ENCODE measurements at regions of chr6 and their contacts with region 1.

Region 1: DNA sequence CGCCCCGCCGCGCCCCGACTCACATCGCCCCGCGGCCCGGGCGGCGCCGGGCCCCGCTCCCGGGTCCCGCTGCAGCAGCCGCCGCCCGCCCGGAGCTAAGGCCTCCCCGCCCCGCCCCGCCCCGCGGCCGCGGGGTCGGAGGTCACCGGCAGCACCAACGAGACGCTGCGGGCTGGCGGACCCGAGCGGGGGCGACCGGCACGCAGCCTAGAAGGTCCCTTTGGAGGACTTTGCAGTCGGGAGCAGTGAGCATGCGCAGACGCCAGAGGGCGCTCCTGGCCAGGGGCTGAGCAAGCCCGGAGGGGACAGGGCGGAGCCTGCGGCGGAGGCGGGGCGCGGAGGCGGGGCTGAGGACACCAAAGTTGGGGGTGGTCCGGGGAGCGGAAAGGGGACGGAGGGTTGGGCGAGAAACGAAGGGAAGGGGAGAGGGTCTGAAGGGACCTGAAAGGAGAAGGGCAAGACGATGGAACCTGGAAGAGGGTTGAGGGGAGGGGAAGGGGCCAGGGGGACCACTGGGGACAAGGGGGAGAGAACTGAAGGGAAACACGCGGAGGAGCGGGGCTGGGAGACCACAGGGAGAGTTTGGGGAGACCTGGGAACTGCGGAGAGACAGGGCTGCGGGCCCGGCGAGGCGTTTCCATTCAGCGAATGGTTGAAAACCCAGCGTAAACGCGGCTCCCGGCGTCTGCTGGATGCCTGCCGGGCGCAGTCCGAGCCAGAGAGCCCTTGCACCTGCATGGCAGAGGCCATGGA is at the start of gene FRS3:
- DNase-seq: peak; percentile 98
- H3K4me3 Mint-ChIP-seq: peak within 1 kb of the TSS; percentile 93
- H3K27ac Mint-ChIP-seq: peak within 1 kb of the TSS; percentile 67
- H3K4me1 Mint-ChIP-seq: peaks cover 14% of the 10 kb centered on the region
- H3K27me3 Mint-ChIP-seq: peaks cover 8% of the 10 kb centered on the region
- total RNA-seq, gene FRS3: 4.7 and 5.8 TPM in 2 replicates

Region 2: GRCh38 chr6:41602864-41603608 is 176.9 kb before region 1 on chr6:
- intact Hi-C with region 1: loop called (anchors 5 kb)
- DNase-seq: peak; percentile 66
- H3K4me3 Mint-ChIP-seq: no peak overlapping the region
- H3K27ac Mint-ChIP-seq: no peak overlapping the region
- H3K4me1 Mint-ChIP-seq: peaks cover 4% of the 10 kb centered on the region
- H3K27me3 Mint-ChIP-seq: peaks cover 4% of the 10 kb centered on the region

Region 3: GRCh38 chr6:41705996-41706835 is 73.8 kb before region 1 on chr6:
- intact Hi-C with region 1: loop called (anchors 10 kb)
- DNase-seq: peak; percentile 43
- H3K4me3 Mint-ChIP-seq: no peak overlapping the region
- H3K27ac Mint-ChIP-seq: peak overlapping the region; percentile 43
- H3K4me1 Mint-ChIP-seq: peaks cover 23% of the 10 kb centered on the region
- H3K27me3 Mint-ChIP-seq: no peaks in the 10 kb centered on the region

Region 4: DNA sequence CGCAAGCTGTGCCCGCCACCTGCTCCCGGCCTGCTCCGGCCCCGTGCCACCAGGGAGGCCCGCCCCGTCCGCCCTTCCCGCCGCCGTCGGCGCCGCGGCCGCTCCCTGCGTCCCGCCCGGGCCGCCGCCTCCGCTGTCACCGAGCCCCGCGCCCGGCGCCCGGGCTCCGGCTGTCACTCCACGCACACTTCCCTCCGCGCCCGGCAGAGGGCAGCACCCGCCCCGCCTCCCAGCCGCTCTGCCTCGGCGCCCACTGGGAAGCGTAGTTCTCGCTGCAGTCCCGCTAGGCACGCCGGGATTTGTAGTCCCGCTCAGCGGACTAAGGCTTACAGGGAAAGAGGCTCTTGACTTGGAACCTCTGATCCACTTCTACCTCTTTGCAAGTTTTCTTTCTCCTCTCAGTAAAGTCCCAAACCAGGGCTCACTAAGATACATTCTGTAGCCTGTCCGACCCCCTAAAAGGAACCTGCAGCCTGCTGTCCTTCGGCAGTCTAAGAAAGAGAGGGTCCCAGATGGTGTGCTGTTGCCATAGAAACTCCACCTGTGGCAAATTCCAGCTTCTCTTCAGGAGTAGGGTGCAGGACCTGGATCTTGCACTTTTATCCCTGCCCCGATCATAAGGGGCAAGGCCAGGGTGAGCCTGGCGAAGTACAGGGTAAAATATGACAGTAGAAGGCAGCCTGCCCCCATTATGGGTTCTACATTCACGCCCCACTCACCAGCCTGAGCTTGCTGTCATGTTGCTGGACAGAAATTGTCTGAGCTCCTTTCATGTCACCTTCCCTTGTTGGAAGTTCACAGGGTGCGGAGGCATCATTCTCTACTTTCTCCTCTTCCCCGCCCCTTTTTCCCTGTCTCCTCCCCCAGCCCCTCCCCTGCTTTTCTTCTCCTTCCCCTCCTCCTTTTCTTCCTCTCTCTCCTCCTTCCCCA is 44.3 kb before region 1 on chr6 and contains the start of gene TFEB:
- intact Hi-C with region 1: loop called (anchors 1 kb)
- DNase-seq: peak; percentile 92
- H3K4me3 Mint-ChIP-seq: peak within 1 kb of the TSS; percentile 72
- H3K27ac Mint-ChIP-seq: no peak within 1 kb of the TSS
- H3K4me1 Mint-ChIP-seq: peaks cover 22% of the 10 kb centered on the region
- H3K27me3 Mint-ChIP-seq: no peaks in the 10 kb centered on the region
- total RNA-seq, gene TFEB: 11.2 and 13.4 TPM in 2 replicates

Region 5: GRCh38 chr6:41818271-41819054 is 38.5 kb after region 1 on chr6:
- intact Hi-C with region 1: no loop called
- DNase-seq: no peak
- H3K4me3 Mint-ChIP-seq: no peak overlapping the region
- H3K27ac Mint-ChIP-seq: no peak overlapping the region
- H3K4me1 Mint-ChIP-seq: peaks cover 4% of the 10 kb centered on the region
- H3K27me3 Mint-ChIP-seq: no peaks in the 10 kb centered on the region

Region 6: GRCh38 chr6:42043787-42044475 is 264.0 kb after region 1 on chr6:
- intact Hi-C with region 1: loop called (anchors 1 kb)
- DNase-seq: peak; percentile 85
- H3K4me3 Mint-ChIP-seq: peak overlapping the region; percentile 66
- H3K27ac Mint-ChIP-seq: peak overlapping the region; percentile 66
- H3K4me1 Mint-ChIP-seq: peaks cover 75% of the 10 kb centered on the region
- H3K27me3 Mint-ChIP-seq: no peaks in the 10 kb centered on the region

Region 7: GRCh38 chr6:42166444-42167141 is 386.6 kb after region 1 on chr6:
- intact Hi-C with region 1: loop called (anchors 5 kb)
- DNase-seq: peak; percentile 64
- H3K4me3 Mint-ChIP-seq: no peak overlapping the region
- H3K27ac Mint-ChIP-seq: no peak overlapping the region
- H3K4me1 Mint-ChIP-seq: no peaks in the 10 kb centered on the region
- H3K27me3 Mint-ChIP-seq: peaks cover 6% of the 10 kb centered on the region

Region 8: DNA sequence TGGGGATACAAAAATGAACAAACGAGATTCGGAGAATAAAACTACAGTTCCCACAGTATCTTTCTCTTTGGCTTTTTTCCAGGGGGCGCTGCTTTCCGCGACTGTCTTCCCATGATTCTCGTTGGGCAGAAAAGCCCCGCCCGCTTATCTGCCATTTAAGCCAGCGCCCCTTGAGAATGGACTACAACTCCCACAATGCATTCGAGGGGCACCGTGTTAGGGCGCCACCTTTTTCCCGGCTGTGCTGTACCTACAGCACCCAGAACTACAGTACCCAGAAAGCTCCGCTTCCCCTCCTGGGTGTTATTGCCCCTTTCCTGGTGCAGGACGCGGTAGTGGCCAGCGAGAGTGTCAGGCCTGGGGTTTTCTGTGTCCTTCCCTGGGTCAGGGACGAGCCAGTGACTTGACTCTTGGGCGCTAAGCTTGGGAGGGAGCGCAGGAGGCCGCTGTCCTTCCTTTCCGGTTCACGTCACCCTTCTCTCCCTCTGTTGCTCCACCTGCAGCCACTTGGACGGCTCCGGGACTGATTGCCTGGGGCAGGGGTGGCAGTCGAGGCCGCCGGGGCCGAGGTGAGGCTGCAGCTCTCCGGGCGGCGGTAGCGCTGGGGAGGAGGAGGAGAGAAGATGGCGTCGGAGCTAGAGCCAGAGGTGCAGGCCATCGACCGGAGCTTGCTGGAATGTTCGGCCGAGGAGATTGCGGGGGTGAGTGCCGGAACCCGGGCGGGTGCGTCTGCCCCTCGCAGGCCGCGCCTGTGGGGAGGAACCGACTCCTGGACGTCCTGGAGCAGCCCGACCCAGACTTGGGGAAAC is 783.9 kb after region 1 on chr6 and contains the start of gene UBR2:
- intact Hi-C with region 1: loop called (anchors 5 kb)
- DNase-seq: peak; percentile 91
- H3K4me3 Mint-ChIP-seq: peak within 1 kb of the TSS; percentile 93
- H3K27ac Mint-ChIP-seq: peak within 1 kb of the TSS; percentile 87
- H3K4me1 Mint-ChIP-seq: peaks cover 26% of the 10 kb centered on the region
- H3K27me3 Mint-ChIP-seq: peaks cover 2% of the 10 kb centered on the region
- total RNA-seq, gene UBR2: 28.6 and 29.6 TPM in 2 replicates

Measured in activated T-helper 2 cell treated with anti-CD3 and anti-CD28 coated beads, Interferon-gamma antibody, Interleukin-2, Interleukin-4, amounts not matched to agents 10 μg/mL and 5 μg/mL and 100 μg/mL, durations not matched to agents 14 hours and 24 hours and 36 hours (primary cell).